Activated naive CD4-positive, alpha-beta T cell treated with anti-CD3 and anti-CD28 coated beads for 36 hours (primary cell): ENCODE measurements at regions of chr7 and their contacts with region 1.

Region 1: GRCh38 chr7:36487756-36488336 is 98.2 kb downstream of the ANLN start:
- DNase-seq: peak; percentile 54
- H3K4me3 Mint-ChIP-seq: no peak overlapping the region
- H3K27ac Mint-ChIP-seq: no peak overlapping the region
- H3K4me1 Mint-ChIP-seq: peaks cover 2% of the 10 kb centered on the region
- H3K27me3 Mint-ChIP-seq: no peaks in the 10 kb centered on the region

Region 2: DNA sequence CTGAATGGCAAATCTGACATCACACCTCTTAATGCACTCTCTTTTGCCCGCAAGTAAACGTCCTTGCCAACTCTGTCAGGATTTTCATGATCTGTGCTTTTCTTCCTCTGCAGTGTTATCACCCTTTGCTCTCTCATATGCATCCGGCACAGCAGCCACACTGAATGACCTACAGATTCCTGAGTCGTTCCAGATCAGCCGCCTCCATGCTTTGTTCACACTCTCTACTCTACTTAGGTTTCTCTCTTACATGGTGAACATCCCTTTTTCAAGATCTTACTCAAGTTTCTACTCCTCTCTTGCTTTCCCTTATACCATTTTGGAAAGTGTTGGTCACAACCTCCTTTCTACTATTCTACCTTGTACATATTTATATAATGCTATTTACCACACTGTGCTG is 364.2 kb after region 1 on chr7:
- CTCF ChIA-PET with region 1: no interaction called
- intact Hi-C with region 1: loop called (anchors 10 kb)
- DNase-seq: peak; percentile 18
- H3K4me3 Mint-ChIP-seq: no peak overlapping the region
- H3K27ac Mint-ChIP-seq: peak overlapping the region; percentile 54
- H3K4me1 Mint-ChIP-seq: peaks cover 17% of the 10 kb centered on the region
- H3K27me3 Mint-ChIP-seq: no peaks in the 10 kb centered on the region

Region 3: GRCh38 chr7:36986429-36987362 is 498.9 kb after region 1 on chr7:
- CTCF ChIA-PET with region 1: no interaction called
- intact Hi-C with region 1: loop called (anchors 10 kb)
- DNase-seq: peak; percentile 80
- H3K4me3 Mint-ChIP-seq: no peak overlapping the region
- H3K27ac Mint-ChIP-seq: no peak overlapping the region
- H3K4me1 Mint-ChIP-seq: peaks cover 27% of the 10 kb centered on the region
- H3K27me3 Mint-ChIP-seq: no peaks in the 10 kb centered on the region

Region 4: GRCh38 chr7:37201003-37201875 is 713.4 kb after region 1 on chr7:
- CTCF ChIA-PET with region 1: interaction called, 6 read pairs
- intact Hi-C with region 1: loop called (anchors 1 kb)
- DNase-seq: peak; percentile 64
- H3K4me3 Mint-ChIP-seq: no peak overlapping the region
- H3K27ac Mint-ChIP-seq: no peak overlapping the region
- H3K4me1 Mint-ChIP-seq: peaks cover 2% of the 10 kb centered on the region
- H3K27me3 Mint-ChIP-seq: no peaks in the 10 kb centered on the region